PC-9 (cell line): ENCODE measurements at regions of chr1 and their contacts with region 1.

Region 1: DNA sequence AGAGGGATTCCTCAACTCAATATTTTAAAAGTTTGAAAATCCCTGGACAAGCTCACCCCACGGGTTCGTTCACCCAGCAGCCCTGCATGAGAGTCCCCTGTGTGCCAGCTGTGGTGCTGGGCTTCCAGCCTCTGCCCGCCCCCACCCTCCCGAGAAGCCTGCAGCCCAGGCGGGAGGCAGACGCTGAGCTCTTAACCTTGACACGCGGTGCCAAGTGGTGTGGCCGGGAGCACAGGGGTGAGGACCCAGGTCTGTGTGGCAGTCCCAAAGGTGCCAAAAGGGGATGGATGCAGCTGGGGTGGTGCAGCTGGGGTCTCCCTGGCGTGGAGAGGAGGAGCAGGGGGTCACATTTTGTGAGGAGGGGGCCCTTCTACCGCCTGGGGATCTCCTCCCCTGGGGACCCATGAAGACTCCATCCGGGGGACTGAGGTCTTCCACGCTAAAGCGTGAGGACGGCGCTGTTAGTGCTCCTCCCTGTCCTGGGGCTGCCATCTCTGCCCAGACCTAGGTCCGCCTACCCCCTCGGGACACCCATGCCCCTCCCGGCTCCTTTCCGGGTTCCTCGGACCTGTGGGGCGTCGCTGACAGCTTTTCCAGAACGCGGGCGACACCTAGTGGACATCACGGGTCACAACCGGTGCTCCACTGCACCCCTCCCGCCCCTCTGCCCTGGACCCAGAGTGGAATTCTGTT is 12.9 kb downstream of the PLA2G2F start:
- DNase-seq: peak; percentile 63 to 83
- H3K4me3 ChIP-seq: peak overlapping the region; percentile 21; the same call in 1 of the 2 replicates
- H3K27ac ChIP-seq: peak overlapping the region; percentile 91
- H3K4me1 ChIP-seq: peaks cover 20% of the 10 kb centered on the region
- H3K27me3 ChIP-seq: no peaks in the 10 kb centered on the region
- CTCF ChIP-seq: peak; percentile 87

Region 2: GRCh38 chr1:19661721-19662228 is 490.3 kb before region 1 on chr1:
- CTCF ChIA-PET with region 1: no interaction called
- POLR2A ChIA-PET with region 1: no interaction called
- intact Hi-C with region 1: loop called (anchors 5 kb)
- DNase-seq: peak in 1 of 2 experiments; percentile 28
- H3K4me3 ChIP-seq: no peak overlapping the region
- H3K27ac ChIP-seq: no peak overlapping the region
- H3K4me1 ChIP-seq: no peaks in the 10 kb centered on the region
- H3K27me3 ChIP-seq: no peaks in the 10 kb centered on the region
- CTCF ChIP-seq: peak; percentile 72

Region 3: DNA sequence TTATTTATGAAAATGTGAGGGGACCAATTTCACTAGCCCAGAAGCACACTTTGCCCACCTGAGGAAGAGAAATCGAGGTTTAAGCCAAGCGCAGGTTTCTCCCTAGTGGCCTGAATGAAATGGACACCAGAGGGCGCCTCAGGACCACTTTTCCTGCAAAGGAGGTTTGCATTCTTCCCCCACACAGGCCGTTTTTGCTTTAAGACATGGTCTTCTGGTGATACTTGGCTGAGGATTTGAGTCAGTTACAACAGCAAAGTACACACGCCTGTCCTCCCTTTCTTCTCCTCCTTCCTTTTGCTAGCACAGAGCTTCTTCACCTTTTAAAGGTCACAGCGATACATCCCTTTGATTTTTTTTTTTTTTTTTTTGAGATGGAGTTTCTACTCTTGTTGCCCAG is 234.0 kb before region 1 on chr1:
- CTCF ChIA-PET with region 1: interaction called, 4 read pairs
- POLR2A ChIA-PET with region 1: no interaction called
- intact Hi-C with region 1: loop called (anchors 1 kb)
- DNase-seq: peak; percentile 57 to 75
- H3K4me3 ChIP-seq: no peak overlapping the region
- H3K27ac ChIP-seq: no peak overlapping the region
- H3K4me1 ChIP-seq: peaks cover 26% of the 10 kb centered on the region
- H3K27me3 ChIP-seq: no peaks in the 10 kb centered on the region
- CTCF ChIP-seq: peak; percentile 87

Region 4: DNA sequence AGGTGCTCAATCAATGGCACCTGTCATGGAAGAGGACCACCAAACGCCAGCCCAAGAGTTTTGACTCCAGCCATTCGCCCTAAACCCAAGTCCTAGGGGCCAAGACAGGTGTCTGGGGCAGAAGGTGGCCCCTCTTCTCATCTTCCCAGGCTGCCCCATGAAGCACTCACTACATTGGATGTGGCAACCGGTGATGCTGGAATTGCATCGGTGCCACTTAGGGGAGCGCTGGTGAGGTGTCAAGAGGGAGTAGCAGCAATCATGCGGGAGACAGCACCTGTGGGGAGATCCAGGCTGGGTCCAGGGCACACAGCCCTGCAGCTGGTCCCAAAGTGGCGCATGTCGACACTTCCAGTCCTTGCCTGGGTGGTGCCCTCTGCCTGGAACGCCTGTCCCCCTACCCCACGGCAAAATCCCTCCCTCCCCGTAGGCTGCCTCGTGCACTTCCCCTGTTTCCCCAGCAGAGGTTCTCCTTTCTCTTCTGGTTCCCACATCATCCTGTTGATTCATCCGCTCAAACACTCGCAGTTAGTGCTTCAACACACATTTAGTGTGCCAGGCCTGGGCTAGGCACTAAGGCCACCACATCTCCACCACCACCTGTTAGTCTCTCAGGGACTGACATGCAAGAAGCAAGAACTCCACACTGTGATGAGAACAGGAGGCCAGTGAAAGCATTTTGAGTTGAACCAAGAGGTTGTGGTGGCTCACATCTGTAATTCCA is 51.3 kb before region 1 on chr1:
- CTCF ChIA-PET with region 1: interaction called, 8 read pairs
- POLR2A ChIA-PET with region 1: interaction called, 3 read pairs
- intact Hi-C with region 1: loop called (anchors 1 kb)
- DNase-seq: peak; percentile 45 to 58
- H3K4me3 ChIP-seq: no peak overlapping the region
- H3K27ac ChIP-seq: no peak overlapping the region
- H3K4me1 ChIP-seq: peaks cover 31% of the 10 kb centered on the region
- H3K27me3 ChIP-seq: no peaks in the 10 kb centered on the region
- CTCF ChIP-seq: peak; percentile 82

Region 5: GRCh38 chr1:20185834-20186782 is 34.1 kb after region 1 on chr1 and contains the starts of genes PLA2G2C and UBXN10:
- CTCF ChIA-PET with region 1: no interaction called
- POLR2A ChIA-PET with region 1: interaction called, 29 read pairs
- intact Hi-C with region 1: loop called (anchors 2 kb)
- DNase-seq: peak; percentile 53 to 80
- H3K4me3 ChIP-seq: peak within 1 kb of the TSS; percentile 74
- H3K27ac ChIP-seq: peak within 1 kb of the TSS; percentile 65
- H3K4me1 ChIP-seq: peaks cover 54% of the 10 kb centered on the region
- H3K27me3 ChIP-seq: no peaks in the 10 kb centered on the region
- CTCF ChIP-seq: no peak
- total RNA-seq, gene PLA2G2C: 0.48 and 0.55 TPM in 2 replicates
- total RNA-seq, gene UBXN10: 9.4 and 11.9 TPM in 2 replicates

Region 6: DNA sequence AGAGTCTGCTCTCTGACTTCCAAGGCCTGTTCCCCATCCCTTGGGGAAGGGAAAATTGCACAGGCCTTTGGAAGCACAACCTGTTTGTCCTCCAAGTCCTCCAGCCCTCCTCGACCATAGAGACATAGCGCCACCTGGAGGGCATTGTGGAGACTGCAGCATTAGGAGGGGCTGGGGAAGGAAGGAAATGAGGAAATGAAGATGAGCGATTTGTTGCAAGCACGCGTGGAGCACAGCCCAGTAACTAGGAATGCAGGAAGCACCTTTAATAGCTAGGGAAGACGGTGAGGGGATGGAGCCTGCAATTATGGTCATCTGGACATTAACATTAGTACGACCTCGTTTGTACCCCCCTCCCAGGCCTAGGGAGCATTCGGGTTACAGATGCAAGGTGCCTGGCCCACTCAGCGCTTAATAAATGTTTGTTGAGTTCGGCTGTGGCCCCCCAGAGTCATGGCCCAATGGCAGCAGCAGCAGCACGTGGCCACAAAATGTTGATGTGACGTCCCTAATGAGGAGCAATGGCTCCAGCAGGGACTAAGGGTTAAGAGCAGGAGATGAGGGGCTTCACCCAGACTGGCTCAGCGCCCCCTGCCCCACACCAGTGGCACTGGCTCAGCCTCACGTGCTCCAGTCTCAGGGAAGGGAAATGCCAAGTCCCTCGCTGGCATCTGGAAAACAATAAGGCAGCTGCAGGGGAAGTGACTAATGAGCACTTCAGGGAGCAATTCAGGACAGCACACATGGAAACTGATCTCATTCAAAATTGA is 342.0 kb after region 1 on chr1:
- CTCF ChIA-PET with region 1: interaction called, 8 read pairs
- POLR2A ChIA-PET with region 1: no interaction called
- intact Hi-C with region 1: loop called (anchors 1 kb)
- DNase-seq: peak; percentile 80 to 91
- H3K4me3 ChIP-seq: no peak overlapping the region
- H3K27ac ChIP-seq: peak overlapping the region; percentile 97
- H3K4me1 ChIP-seq: peaks cover 39% of the 10 kb centered on the region
- H3K27me3 ChIP-seq: no peaks in the 10 kb centered on the region
- CTCF ChIP-seq: peak; percentile 93